ENCODE measurements at regions of chr1 and their contacts with region 1.

Region 1: GRCh38 chr1:215819114-215819513 is 252.0 kb downstream of the KCTD3 start:
- DNase-seq: no peak
- ATAC-seq: no peak
- H3K4me3 ChIP-seq: no peak overlapping the region
- H3K4me3 Mint-ChIP-seq: no peak overlapping the region
- H3K27ac ChIP-seq: no peak overlapping the region
- H3K27ac Mint-ChIP-seq: no peak overlapping the region
- H3K4me1 ChIP-seq: no peaks in the 10 kb centered on the region
- H3K4me1 Mint-ChIP-seq: no peaks in the 10 kb centered on the region
- H3K27me3 ChIP-seq: no peaks in the 10 kb centered on the region
- H3K27me3 Mint-ChIP-seq: no peaks in the 10 kb centered on the region
- CTCF ChIP-seq: no peak

Region 2: GRCh38 chr1:216710055-216710454 is 890.9 kb after region 1 on chr1:
- CTCF ChIA-PET with region 1: no interaction called
- POLR2A ChIA-PET with region 1: no interaction called
- intact Hi-C with region 1: loop called in 1 of 2 experiments (anchors 5 kb)
- DNase-seq: no peak
- ATAC-seq: no peak
- H3K4me3 ChIP-seq: no peak overlapping the region
- H3K4me3 Mint-ChIP-seq: no peak overlapping the region
- H3K27ac ChIP-seq: no peak overlapping the region
- H3K27ac Mint-ChIP-seq: no peak overlapping the region
- H3K4me1 ChIP-seq: no peaks in the 10 kb centered on the region
- H3K4me1 Mint-ChIP-seq: no peaks in the 10 kb centered on the region
- H3K27me3 ChIP-seq: no peaks in the 10 kb centered on the region
- H3K27me3 Mint-ChIP-seq: no peaks in the 10 kb centered on the region
- CTCF ChIP-seq: no peak

Measured in CD8-positive, alpha-beta T cell (primary cell).